ENCODE measurements at regions of chr10 and their contacts with region 1.

Region 1: DNA sequence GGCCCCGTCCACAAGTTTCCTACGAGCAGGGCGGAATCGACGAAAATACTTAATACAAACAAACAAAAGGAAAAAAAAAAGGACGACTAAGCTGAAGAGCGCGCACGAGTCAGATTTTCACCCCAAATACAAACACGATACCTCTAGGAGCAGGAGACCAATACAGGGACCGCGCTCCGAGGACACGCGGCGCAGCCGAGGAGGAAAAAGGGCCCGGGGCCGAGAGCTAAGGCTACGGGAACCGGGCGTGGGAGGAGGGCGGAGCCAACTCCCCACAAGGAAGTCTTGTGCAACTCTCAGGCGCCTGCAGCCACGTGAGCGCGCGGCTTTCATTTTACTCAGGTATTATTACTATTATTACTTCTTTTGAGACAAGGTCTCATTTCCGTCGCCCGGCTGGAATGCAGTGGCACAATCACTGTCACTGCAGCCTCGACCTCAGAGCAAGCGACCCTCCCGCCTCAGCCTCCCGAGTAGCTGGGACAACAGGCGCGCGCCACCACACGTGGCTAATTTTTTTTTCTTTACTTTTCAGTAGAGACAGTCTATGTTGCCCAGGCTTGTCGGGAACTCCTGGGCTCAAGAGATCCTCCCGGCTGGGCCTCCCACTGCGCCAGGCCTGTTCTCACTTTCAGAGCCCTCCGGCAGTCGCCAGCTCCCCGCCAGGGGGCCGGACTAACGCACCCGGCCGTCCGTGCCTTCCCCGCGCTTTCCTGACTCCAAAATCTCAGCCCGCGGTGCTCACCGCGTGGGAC is 1.2 kb downstream of the HNRNPF start:
- DNase-seq: peak; percentile 75
- ATAC-seq: peak; percentile 35
- H3K4me3 Mint-ChIP-seq: peak overlapping the region; percentile 95
- H3K27ac Mint-ChIP-seq: peak overlapping the region; percentile 98
- H3K4me1 Mint-ChIP-seq: peaks cover 46% of the 10 kb centered on the region
- H3K27me3 Mint-ChIP-seq: no peaks in the 10 kb centered on the region
- CTCF ChIP-seq: no peak

Region 2: GRCh38 chr10:42552493-42553407 is 855.0 kb before region 1 on chr10:
- CTCF ChIA-PET with region 1: no interaction called
- POLR2A ChIA-PET with region 1: no interaction called
- intact Hi-C with region 1: loop called (anchors 2 kb)
- DNase-seq: peak; percentile 85
- ATAC-seq: peak; percentile 97
- H3K4me3 Mint-ChIP-seq: peak overlapping the region; percentile 96
- H3K27ac Mint-ChIP-seq: peak overlapping the region; percentile 89
- H3K4me1 Mint-ChIP-seq: peaks cover 35% of the 10 kb centered on the region
- H3K27me3 Mint-ChIP-seq: no peaks in the 10 kb centered on the region
- CTCF ChIP-seq: no peak

Region 3: GRCh38 chr10:43361986-43362839 is 45.5 kb before region 1 on chr10:
- CTCF ChIA-PET with region 1: no interaction called
- POLR2A ChIA-PET with region 1: interaction called, 3 read pairs
- intact Hi-C with region 1: loop called (anchors 1 kb)
- DNase-seq: peak; percentile 86
- ATAC-seq: peak; percentile 98
- H3K4me3 Mint-ChIP-seq: peak overlapping the region; percentile 97
- H3K27ac Mint-ChIP-seq: peak overlapping the region; percentile 93
- H3K4me1 Mint-ChIP-seq: peaks cover 23% of the 10 kb centered on the region
- H3K27me3 Mint-ChIP-seq: no peaks in the 10 kb centered on the region
- CTCF ChIP-seq: no peak

Region 4: DNA sequence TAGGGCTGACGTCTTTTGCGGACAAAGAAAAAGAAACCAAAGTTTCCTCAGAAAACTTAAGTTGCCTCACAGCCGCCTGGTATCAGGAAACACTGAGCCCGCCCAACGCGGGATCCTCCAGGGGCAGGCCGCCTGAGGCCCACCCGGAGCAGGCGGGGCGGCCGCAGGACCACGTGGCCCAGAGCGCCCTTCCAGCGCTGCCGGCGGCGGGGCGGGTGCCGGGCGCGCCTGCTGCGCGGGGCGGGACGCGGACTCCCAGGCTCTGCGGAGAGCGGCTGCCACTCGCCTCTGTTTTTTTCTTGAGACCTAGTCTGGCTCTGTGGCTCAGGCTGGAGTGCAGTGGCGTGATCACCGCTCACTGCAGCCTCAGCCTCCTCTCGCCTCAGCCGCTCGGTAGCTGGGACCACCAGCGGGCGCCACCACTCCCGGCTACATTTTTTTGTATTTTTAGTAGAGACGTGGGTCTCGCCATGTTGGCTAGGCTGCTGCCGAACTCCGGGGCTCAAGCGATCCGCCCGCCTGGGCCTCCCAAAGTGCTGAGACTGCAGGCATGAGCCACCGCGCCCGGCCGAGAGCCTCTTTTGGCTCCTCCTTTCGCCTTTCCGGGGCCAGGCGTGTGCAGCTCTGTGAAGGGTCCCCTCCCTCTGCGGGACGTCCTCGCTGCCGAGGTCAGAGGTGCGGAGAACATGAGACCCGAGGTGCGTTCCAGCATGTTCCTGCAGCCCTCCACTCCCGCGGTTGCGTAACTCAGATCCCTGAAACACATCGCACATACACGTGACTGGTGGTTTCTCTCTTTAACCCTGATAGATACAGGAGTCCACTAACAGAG is 12.8 kb after region 1 on chr10:
- CTCF ChIA-PET with region 1: interaction called, 4 read pairs
- POLR2A ChIA-PET with region 1: interaction called, 128 read pairs
- intact Hi-C with region 1: loop called (anchors 1 kb)
- DNase-seq: peak; percentile 73
- ATAC-seq: peak; percentile 83
- H3K4me3 Mint-ChIP-seq: peak overlapping the region; percentile 88
- H3K27ac Mint-ChIP-seq: peak overlapping the region; percentile 94
- H3K4me1 Mint-ChIP-seq: peaks cover 36% of the 10 kb centered on the region
- H3K27me3 Mint-ChIP-seq: no peaks in the 10 kb centered on the region
- CTCF ChIP-seq: no peak

Region 5: DNA sequence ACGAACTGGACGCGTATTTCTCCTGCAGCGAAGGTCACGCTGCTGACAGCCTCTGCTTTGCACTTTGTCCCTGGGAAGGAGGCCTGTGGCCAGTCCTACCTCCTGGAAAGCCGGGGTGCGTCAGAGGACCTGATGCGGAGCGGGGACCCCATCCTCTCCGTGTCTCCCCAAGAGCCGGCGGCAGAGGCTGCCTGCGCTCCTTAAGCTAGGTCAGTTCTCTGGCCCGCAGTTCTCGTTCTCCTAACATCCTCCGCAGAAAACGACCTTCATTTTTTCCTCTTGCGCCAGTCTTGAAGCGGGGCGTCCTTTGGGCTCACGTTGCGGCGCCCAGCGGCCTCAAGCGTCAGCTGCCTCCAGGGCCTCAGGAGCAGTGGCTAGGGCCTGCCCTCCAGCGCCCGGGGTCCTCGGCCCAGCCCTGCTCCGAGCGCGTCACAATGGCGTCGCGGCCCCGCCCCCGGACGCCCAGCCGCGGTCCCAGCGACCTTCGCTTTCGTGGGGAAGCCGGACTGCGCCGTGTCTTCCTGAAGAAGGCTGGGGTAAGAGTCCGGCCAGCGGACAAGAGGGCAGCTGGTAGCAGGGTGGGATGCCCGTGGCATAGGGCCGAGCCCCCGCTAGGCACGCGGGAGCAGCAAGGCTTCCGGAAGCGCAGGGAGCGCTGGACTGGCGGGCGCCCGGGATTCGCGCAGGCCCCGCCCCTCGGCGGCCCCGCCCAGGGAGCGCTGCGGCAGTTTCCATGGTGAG is 28.8 kb after region 1 on chr10 and contains the start of gene ZNF487:
- CTCF ChIA-PET with region 1: no interaction called
- POLR2A ChIA-PET with region 1: interaction called, 44 read pairs
- intact Hi-C with region 1: loop called (anchors 1 kb)
- DNase-seq: peak; percentile 97
- ATAC-seq: peak; percentile 90
- H3K4me3 Mint-ChIP-seq: peak within 1 kb of the TSS; percentile 91
- H3K27ac Mint-ChIP-seq: peak within 1 kb of the TSS; percentile 95
- H3K4me1 Mint-ChIP-seq: peaks cover 34% of the 10 kb centered on the region
- H3K27me3 Mint-ChIP-seq: no peaks in the 10 kb centered on the region
- CTCF ChIP-seq: no peak
- total RNA-seq, gene ZNF487: 2.9 and 3.4 TPM in 2 replicates

Region 6: GRCh38 chr10:43461950-43462349 is 54.2 kb after region 1 on chr10:
- CTCF ChIA-PET with region 1: no interaction called
- POLR2A ChIA-PET with region 1: interaction called, 12 read pairs
- intact Hi-C with region 1: no loop called
- DNase-seq: no peak
- ATAC-seq: peak; percentile 62
- H3K4me3 Mint-ChIP-seq: no peak overlapping the region
- H3K27ac Mint-ChIP-seq: no peak overlapping the region
- H3K4me1 Mint-ChIP-seq: peaks cover 4% of the 10 kb centered on the region
- H3K27me3 Mint-ChIP-seq: no peaks in the 10 kb centered on the region
- CTCF ChIP-seq: peak; percentile 36

Region 7: DNA sequence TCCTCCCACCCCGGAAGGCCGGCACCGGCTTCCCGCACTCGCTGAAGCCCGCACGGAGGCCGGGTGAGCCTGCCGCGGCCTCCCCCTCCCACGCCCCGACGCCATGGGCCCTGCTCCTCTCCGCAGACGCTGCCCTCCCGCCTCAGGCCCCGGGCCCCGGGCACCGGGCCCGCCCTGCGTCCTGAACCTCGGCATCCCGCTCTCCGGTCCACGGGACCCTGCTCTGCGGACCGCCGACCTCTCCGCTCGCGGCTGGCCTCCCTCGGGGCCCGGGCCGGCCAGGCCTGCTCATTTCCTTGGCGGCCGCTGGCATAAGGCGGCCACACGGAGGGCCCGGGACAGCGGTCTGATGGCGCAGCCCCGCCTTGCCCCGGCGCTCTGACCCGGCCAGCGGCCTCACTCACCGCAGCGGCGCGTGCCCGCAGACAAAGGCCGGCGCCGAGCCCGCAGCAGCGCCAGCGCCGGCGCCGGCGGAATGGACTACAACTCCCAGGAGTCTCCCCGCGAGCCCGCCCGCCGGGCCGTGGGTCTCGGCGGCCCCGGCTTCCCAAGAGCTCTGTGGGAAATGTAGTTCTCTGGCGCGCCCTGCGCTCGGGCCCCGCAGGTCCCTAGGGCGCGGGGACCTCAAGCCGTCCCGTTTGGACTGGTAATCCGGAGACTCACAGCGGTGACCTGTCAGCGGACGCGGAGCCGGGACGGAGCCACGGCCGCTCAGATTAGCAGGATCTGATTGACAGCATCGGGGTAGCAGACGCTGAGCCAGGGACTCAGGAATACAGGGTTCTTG is 240.8 kb after region 1 on chr10 and contains the start of gene ZNF32:
- CTCF ChIA-PET with region 1: no interaction called
- POLR2A ChIA-PET with region 1: interaction called, 3 read pairs
- intact Hi-C with region 1: loop called (anchors 5 kb)
- DNase-seq: peak; percentile 79
- ATAC-seq: peak; percentile 98
- H3K4me3 Mint-ChIP-seq: peak within 1 kb of the TSS; percentile 94
- H3K27ac Mint-ChIP-seq: peak within 1 kb of the TSS; percentile 77
- H3K4me1 Mint-ChIP-seq: peaks cover 20% of the 10 kb centered on the region
- H3K27me3 Mint-ChIP-seq: peaks cover 4% of the 10 kb centered on the region
- CTCF ChIP-seq: no peak
- total RNA-seq, gene ZNF32: 26.7 and 30.1 TPM in 2 replicates

Measured in activated B cell treated with CpG ODN at 0.5 μM for 24 hours (primary cell).